ENCODE measurements at regions of chr15 and their contacts with region 1.

Region 1: DNA sequence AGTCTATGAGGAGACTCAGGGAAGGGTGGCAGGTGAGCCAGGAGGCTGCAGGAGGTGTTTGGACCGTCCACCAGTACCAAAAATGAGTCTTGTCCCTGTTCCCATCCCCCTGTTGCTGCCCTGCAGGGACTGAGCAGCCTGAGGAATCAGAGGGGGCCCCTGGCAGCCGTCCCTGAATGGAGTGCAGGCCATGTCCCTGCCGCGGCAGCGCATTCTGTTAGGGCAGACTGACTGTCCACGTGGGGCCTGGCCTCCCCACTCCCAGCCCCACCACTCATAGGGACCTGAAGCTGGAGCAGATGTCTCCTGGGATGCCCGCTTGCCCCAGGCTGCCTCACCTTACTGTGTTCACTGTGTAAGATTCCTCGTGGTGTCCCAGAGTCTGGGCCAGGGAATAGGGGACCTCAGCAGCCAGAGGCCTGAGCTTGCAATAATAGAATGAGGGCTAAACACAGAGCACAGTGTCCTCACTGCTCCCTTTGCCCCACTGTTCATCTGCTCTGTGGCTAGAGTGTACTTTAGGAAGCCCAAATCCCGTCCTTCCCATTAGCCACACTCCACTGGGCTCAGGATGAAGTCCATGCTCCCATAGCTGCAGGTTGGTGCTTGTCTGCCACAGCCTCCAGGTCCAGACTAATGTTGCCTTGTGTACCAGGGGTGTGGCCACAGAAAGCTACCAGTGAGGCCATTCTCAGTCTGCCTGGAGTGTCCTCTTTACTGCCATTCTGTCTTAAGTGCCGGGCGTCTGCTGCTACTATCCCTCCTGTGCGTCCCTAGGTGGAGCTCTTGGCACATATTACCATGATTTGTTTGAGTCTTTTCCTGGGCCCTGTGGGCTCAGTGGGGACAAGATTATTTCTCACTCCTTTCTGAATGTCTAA is 63.2 kb downstream of the HCN4 start:
- DNase-seq: peak; percentile 39 to 51
- H3K4me3 ChIP-seq: no peak overlapping the region
- H3K27ac ChIP-seq: no peak overlapping the region
- H3K4me1 ChIP-seq: no peaks in the 10 kb centered on the region
- H3K27me3 ChIP-seq: no peaks in the 10 kb centered on the region
- CTCF ChIP-seq: peak; percentile 82

Region 2: DNA sequence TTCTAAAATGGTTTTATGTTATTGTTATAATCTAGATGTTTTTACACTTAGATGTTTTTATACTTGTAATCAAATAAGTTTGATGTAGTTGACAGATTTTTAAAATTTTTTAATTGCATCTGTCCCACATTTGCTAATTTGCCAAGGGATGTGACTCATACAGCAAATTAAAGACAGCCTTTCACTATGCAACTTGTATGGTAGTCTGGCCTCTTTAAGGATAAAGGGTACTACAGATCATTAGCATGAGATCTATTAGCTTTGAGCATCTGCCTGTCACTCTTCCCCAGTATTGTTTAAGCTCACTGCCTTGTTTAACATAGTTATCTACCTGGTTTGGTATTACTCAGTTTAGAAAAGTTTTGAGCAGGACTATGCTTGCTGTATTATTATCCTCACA is 244.6 kb after region 1 on chr15:
- CTCF ChIA-PET with region 1: no interaction called
- POLR2A ChIA-PET with region 1: no interaction called
- intact Hi-C with region 1: loop called (anchors 5 kb)
- DNase-seq: no peak
- H3K4me3 ChIP-seq: no peak overlapping the region
- H3K27ac ChIP-seq: no peak overlapping the region
- H3K4me1 ChIP-seq: no peaks in the 10 kb centered on the region
- H3K27me3 ChIP-seq: no peaks in the 10 kb centered on the region
- CTCF ChIP-seq: no peak

Region 3: GRCh38 chr15:73650416-73651126 is 345.0 kb after region 1 on chr15:
- CTCF ChIA-PET with region 1: no interaction called
- POLR2A ChIA-PET with region 1: no interaction called
- intact Hi-C with region 1: no loop called
- DNase-seq: peak in 1 of 2 experiments; percentile 43
- H3K4me3 ChIP-seq: no peak overlapping the region
- H3K27ac ChIP-seq: no peak overlapping the region
- H3K4me1 ChIP-seq: peaks cover 33% of the 10 kb centered on the region
- H3K27me3 ChIP-seq: no peaks in the 10 kb centered on the region
- CTCF ChIP-seq: no peak

Region 4: GRCh38 chr15:73691396-73691795 is 385.8 kb after region 1 on chr15:
- CTCF ChIA-PET with region 1: no interaction called
- POLR2A ChIA-PET with region 1: no interaction called
- intact Hi-C with region 1: no loop called
- DNase-seq: no peak
- H3K4me3 ChIP-seq: no peak overlapping the region
- H3K27ac ChIP-seq: no peak overlapping the region
- H3K4me1 ChIP-seq: peaks cover 24% of the 10 kb centered on the region
- H3K27me3 ChIP-seq: no peaks in the 10 kb centered on the region
- CTCF ChIP-seq: no peak

Region 5: GRCh38 chr15:74808073-74808755 is 1502.6 kb after region 1 on chr15:
- CTCF ChIA-PET with region 1: interaction called, 11 read pairs
- POLR2A ChIA-PET with region 1: no interaction called
- intact Hi-C with region 1: no loop called
- DNase-seq: peak in 1 of 2 experiments; percentile 41
- H3K4me3 ChIP-seq: no peak overlapping the region
- H3K27ac ChIP-seq: no peak overlapping the region
- H3K4me1 ChIP-seq: no peaks in the 10 kb centered on the region
- H3K27me3 ChIP-seq: no peaks in the 10 kb centered on the region
- CTCF ChIP-seq: no peak

Measured in PC-9 (cell line).